Cardiac septum (tissue), 1 donor: ENCODE measurements at regions of chr11 and their contacts with region 1.

Region 1: DNA sequence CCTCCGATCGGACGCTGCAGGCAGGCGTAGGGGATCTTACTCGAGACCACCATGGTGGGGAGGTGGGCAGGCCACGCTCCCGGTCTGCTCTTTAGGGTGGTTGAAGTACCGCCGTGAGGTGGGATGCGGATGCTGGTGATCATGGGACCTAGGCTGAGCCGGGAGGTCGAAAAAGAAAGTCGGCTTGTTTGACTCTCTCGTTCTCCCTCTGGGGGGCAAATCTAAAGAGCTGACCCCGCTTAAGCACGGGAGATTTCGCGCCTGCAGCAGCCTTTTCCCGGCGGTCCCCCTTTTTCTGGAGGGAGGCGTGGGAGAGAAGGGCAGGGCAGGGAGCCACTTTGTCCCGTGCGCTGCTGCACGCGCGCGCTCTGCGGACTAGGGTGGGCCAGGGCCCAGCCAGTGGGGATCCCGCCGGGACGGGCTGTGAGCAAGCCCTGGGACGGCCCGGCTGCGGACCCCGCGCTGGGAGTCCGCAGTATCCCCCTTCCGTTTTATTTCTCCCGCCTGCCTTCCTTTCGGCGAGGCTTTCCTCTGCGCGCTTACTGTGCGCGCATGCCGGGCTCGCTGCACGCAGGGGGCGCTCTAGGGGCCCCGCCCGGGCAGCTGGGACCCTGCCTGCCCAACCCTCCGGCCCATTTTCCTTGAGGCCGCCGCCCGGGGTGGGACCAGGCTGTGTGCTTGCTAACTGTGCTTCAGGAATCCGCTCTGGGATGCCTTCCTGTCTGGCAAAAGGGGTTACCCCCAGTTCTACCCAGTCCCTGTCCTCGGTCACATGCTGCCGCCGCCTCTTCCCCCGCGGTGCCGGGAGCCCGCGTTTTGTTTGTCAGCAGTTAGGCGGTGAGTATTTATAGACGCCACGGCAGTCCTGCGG is 81.0 kb downstream of the PRR5L start:
- DNase-seq: peak; percentile 77

Region 2: GRCh38 chr11:36455658-36456111 is 78.6 kb after region 1 on chr11:
- intact Hi-C with region 1: loop called (anchors 10 kb)
- DNase-seq: peak; percentile 83